CD14-positive monocyte (primary cell): ENCODE measurements at regions of chr1 and their contacts with region 1.

Region 1: DNA sequence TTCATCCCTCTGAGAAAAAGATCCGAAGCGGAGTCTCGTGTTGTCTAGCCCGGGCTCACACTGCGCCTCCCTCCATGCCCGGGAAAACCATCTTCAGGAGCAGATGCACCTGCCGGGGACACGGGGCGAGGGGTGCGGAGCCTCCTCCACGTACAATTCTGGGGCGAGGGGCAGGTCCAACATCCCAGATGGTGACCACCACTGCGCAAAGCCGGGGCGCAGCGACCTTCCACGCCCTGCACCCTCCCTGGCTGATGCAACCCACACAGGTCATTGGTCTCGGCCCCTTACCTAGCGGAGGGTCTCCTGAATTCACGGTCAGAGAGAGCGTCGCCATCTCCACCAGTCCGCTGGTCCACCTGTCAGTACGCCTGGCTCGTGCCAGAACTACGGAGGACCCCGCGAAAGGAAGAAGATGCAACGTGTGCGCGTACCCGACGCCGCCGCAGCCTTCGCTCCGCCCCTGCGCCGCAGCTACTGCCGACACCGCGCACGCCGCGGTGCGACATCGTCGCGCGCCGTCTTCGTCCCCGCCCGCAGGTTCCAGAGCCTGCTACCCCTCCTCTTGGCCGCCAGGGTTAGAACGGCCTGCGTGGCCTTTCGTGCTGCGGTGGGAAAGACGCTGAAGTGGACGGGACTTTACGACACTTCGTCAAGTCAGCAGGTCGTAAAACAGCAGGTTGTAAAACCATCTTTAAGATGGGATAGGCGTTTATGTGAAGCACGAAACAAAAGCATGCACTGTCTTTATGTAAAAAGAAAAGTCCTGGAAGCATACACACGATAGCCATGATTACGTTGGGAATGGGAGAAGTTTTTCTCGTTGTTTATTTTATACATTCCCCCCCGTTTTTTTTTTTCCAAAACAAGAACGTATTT is at the start of gene EPRS1:
- DNase-seq: peak; percentile 92 to 97 (median 96)
- H3K4me3 ChIP-seq: peak within 1 kb of the TSS; percentile 78 to 100 (median 94)
- H3K4me3 Mint-ChIP-seq: peak within 1 kb of the TSS; percentile 92 to 97
- H3K27ac ChIP-seq: peak within 1 kb of the TSS; percentile 46 to 90
- H3K27ac Mint-ChIP-seq: peak within 1 kb of the TSS; percentile 81 to 93 (median 90)
- H3K4me1 ChIP-seq: peaks cover 17 to 25% of the 10 kb centered on the region in 2 donors
- H3K4me1 Mint-ChIP-seq: peaks cover 25% of the 10 kb centered on the region
- H3K27me3 ChIP-seq: no peaks in the 10 kb centered on the region
- H3K27me3 Mint-ChIP-seq: peaks cover 0 to 2% (median 0%) of the 10 kb centered on the region in 3 donors
- CTCF ChIP-seq: peak; percentile 74
- polyA plus RNA-seq, gene EPRS1: 9.3 to 27.6 (median 21.1) TPM

Region 2: DNA sequence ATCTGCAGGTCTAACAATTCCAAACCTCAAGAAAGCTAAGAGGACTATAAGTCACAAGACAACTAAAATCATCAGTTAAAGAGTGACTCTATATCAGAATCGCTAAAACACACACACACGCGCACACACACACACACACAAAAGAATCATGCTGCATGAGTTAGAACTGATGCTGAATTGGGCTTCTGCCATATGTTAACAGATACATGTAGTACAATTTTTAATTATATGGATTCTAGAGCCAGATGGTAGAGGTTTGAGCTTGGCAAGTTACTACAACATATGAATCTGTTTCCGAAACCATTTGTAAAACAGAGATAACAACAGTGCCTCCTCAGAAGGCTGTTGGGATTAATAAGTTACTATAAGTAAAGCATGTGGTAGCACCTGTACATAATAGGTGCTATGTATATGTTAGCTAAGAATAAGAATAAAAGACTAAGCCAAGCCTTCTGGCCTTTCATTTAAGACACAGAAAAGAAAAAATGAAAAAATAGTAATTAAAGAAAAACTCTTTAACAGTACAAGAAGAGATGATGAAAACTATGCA is 17.9 kb before region 1 on chr1:
- intact Hi-C with region 1: no loop called
- DNase-seq: no peak
- H3K4me3 ChIP-seq: no peak overlapping the region
- H3K4me3 Mint-ChIP-seq: no peak overlapping the region
- H3K27ac ChIP-seq: no peak overlapping the region
- H3K27ac Mint-ChIP-seq: no peak overlapping the region
- H3K4me1 ChIP-seq: no peaks in the 10 kb centered on the region
- H3K4me1 Mint-ChIP-seq: no peaks in the 10 kb centered on the region
- H3K27me3 ChIP-seq: no peaks in the 10 kb centered on the region
- H3K27me3 Mint-ChIP-seq: peaks cover 0 to 1% (median 0%) of the 10 kb centered on the region in 3 donors
- CTCF ChIP-seq: no peak

Region 3: GRCh38 chr1:220089650-220090556 is 43.6 kb after region 1 on chr1 and contains the start of gene BPNT1:
- intact Hi-C with region 1: loop called (anchors 5 kb)
- DNase-seq: peak; percentile 90 to 98 (median 95)
- H3K4me3 ChIP-seq: peak within 1 kb of the TSS; percentile 59 to 88 (median 82)
- H3K4me3 Mint-ChIP-seq: peak within 1 kb of the TSS; percentile 93 to 99
- H3K27ac ChIP-seq: peak within 1 kb of the TSS; percentile 69 to 74
- H3K27ac Mint-ChIP-seq: peak within 1 kb of the TSS; percentile 85 to 97 (median 91)
- H3K4me1 ChIP-seq: peaks cover 16 to 30% of the 10 kb centered on the region in 2 donors
- H3K4me1 Mint-ChIP-seq: peaks cover 26% of the 10 kb centered on the region
- H3K27me3 ChIP-seq: no peaks in the 10 kb centered on the region
- H3K27me3 Mint-ChIP-seq: no peaks in the 10 kb centered on the region
- CTCF ChIP-seq: no peak
- polyA plus RNA-seq, gene BPNT1: 5.8 to 10.1 (median 9.8) TPM